Naive thymus-derived CD4-positive, alpha-beta T cell (primary cell): ENCODE measurements at regions of chr3 and their contacts with region 1.

Region 1: DNA sequence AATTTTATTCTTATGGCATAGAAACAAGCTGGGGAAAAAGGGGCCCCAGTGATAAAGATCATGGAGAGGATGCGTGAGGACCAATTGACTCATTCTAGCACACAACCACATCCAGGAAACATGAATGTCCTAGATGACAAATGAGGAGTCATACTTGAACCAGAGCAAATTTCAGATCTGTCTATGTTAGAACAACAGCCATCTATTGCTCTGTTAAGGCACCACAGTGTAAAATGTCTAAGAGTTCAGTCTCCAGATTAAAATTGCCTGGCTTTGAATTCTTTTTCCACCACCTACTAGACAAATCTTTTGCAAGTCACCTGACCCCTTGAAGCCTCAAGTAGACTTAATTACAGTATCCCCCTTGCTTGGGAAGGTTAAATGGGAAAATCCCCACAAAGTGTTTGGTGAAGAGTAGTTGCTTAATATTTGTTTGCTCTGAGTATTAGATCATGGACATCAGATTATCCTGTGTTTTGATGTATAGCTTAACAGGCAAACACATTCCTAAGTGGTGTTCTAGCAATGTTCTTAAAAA is 258.7 kb upstream of the TGFBR2 start:
- DNase-seq: peak in 6 of 9 donors; percentile 11 to 48 (median 32)
- ATAC-seq: peak; percentile 54
- H3K4me3 ChIP-seq: no peak overlapping the region
- H3K4me3 Mint-ChIP-seq: peak overlapping the region in 6 of 10 donors; percentile 5 to 70 (median 32)
- H3K27ac ChIP-seq: no peak overlapping the region
- H3K27ac Mint-ChIP-seq: peak overlapping the region in 5 of 9 donors; percentile 33 to 80 (median 76)
- H3K4me1 ChIP-seq: peaks cover 15 to 47% of the 10 kb centered on the region in 2 donors
- H3K4me1 Mint-ChIP-seq: peaks cover 40 to 82% (median 71%) of the 10 kb centered on the region in 7 donors
- H3K27me3 ChIP-seq: no peaks in the 10 kb centered on the region
- H3K27me3 Mint-ChIP-seq: peaks cover 0 to 17% (median 0%) of the 10 kb centered on the region in 5 donors

Region 2: DNA sequence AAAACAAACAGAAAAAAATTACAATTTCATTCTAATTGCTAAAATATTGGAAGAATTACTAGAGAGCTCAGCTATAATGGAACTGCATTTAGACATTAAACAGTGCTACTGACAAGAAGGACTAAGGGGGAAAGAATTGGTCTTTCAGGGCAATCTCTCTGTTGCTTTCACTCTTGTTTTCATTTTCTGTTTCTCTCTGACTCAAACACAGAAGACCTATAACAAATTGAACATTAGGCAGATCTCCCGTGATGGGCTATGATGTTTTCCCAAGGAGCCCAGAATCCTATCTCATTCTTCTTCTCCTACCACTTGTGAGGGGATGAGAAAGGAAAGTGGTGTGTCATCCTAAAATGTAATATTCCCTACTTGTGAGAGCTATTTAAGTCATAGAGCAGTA is 99.3 kb before region 1 on chr3:
- CTCF ChIA-PET with region 1: no interaction called
- POLR2A ChIA-PET with region 1: no interaction called
- intact Hi-C with region 1: loop called in 1 of 2 experiments (anchors 5 kb)
- DNase-seq: no peak
- ATAC-seq: no peak
- H3K4me3 ChIP-seq: no peak overlapping the region
- H3K4me3 Mint-ChIP-seq: peak overlapping the region in 1 of 10 donors; percentile 24
- H3K27ac ChIP-seq: no peak overlapping the region
- H3K27ac Mint-ChIP-seq: peak overlapping the region in 1 of 9 donors; percentile 36
- H3K4me1 ChIP-seq: no peaks in the 10 kb centered on the region
- H3K4me1 Mint-ChIP-seq: peaks cover 0 to 12% (median 3%) of the 10 kb centered on the region in 7 donors
- H3K27me3 ChIP-seq: no peaks in the 10 kb centered on the region
- H3K27me3 Mint-ChIP-seq: peaks cover 0 to 5% (median 3%) of the 10 kb centered on the region in 5 donors

Region 3: GRCh38 chr3:30286007-30286669 is 61.6 kb before region 1 on chr3:
- CTCF ChIA-PET with region 1: no interaction called
- POLR2A ChIA-PET with region 1: no interaction called
- intact Hi-C with region 1: loop called in 1 of 2 experiments (anchors 5 kb)
- DNase-seq: no peak
- ATAC-seq: no peak
- H3K4me3 ChIP-seq: no peak overlapping the region
- H3K4me3 Mint-ChIP-seq: no peak overlapping the region
- H3K27ac ChIP-seq: no peak overlapping the region
- H3K27ac Mint-ChIP-seq: no peak overlapping the region
- H3K4me1 ChIP-seq: peaks cover 0 to 9% of the 10 kb centered on the region in 2 donors
- H3K4me1 Mint-ChIP-seq: peaks cover 11 to 26% (median 14%) of the 10 kb centered on the region in 7 donors
- H3K27me3 ChIP-seq: no peaks in the 10 kb centered on the region
- H3K27me3 Mint-ChIP-seq: no peaks in the 10 kb centered on the region

Region 4: GRCh38 chr3:30401971-30402370 is 54.2 kb after region 1 on chr3:
- CTCF ChIA-PET with region 1: no interaction called
- POLR2A ChIA-PET with region 1: no interaction called
- intact Hi-C with region 1: no loop called
- DNase-seq: no peak
- ATAC-seq: no peak
- H3K4me3 ChIP-seq: no peak overlapping the region
- H3K4me3 Mint-ChIP-seq: no peak overlapping the region
- H3K27ac ChIP-seq: no peak overlapping the region
- H3K27ac Mint-ChIP-seq: no peak overlapping the region
- H3K4me1 ChIP-seq: no peaks in the 10 kb centered on the region
- H3K4me1 Mint-ChIP-seq: peaks cover 5 to 32% (median 21%) of the 10 kb centered on the region in 7 donors
- H3K27me3 ChIP-seq: no peaks in the 10 kb centered on the region
- H3K27me3 Mint-ChIP-seq: no peaks in the 10 kb centered on the region

Region 5: GRCh38 chr3:30511524-30512278 is 164.0 kb after region 1 on chr3:
- CTCF ChIA-PET with region 1: no interaction called
- POLR2A ChIA-PET with region 1: no interaction called
- intact Hi-C with region 1: no loop called
- DNase-seq: peak in 1 of 9 donors; percentile 4
- ATAC-seq: no peak
- H3K4me3 ChIP-seq: no peak overlapping the region
- H3K4me3 Mint-ChIP-seq: peak overlapping the region in 6 of 10 donors; percentile 7 to 55 (median 30)
- H3K27ac ChIP-seq: no peak overlapping the region
- H3K27ac Mint-ChIP-seq: peak overlapping the region in 2 of 9 donors; percentile 38 to 76
- H3K4me1 ChIP-seq: peaks cover 0 to 10% of the 10 kb centered on the region in 2 donors
- H3K4me1 Mint-ChIP-seq: peaks cover 8 to 17% (median 12%) of the 10 kb centered on the region in 7 donors
- H3K27me3 ChIP-seq: no peaks in the 10 kb centered on the region
- H3K27me3 Mint-ChIP-seq: no peaks in the 10 kb centered on the region

Region 6: GRCh38 chr3:30708472-30708871 is 360.7 kb after region 1 on chr3:
- CTCF ChIA-PET with region 1: no interaction called
- POLR2A ChIA-PET with region 1: no interaction called
- intact Hi-C with region 1: no loop called
- DNase-seq: no peak
- ATAC-seq: no peak
- H3K4me3 ChIP-seq: no peak overlapping the region
- H3K4me3 Mint-ChIP-seq: no peak overlapping the region
- H3K27ac ChIP-seq: no peak overlapping the region
- H3K27ac Mint-ChIP-seq: no peak overlapping the region
- H3K4me1 ChIP-seq: peaks cover 0 to 11% of the 10 kb centered on the region in 2 donors
- H3K4me1 Mint-ChIP-seq: peaks cover 5 to 62% (median 44%) of the 10 kb centered on the region in 7 donors
- H3K27me3 ChIP-seq: no peaks in the 10 kb centered on the region
- H3K27me3 Mint-ChIP-seq: no peaks in the 10 kb centered on the region

Region 7: GRCh38 chr3:30934208-30934550 is 586.4 kb after region 1 on chr3:
- CTCF ChIA-PET with region 1: no interaction called
- POLR2A ChIA-PET with region 1: no interaction called
- intact Hi-C with region 1: no loop called
- DNase-seq: peak in 4 of 9 donors; percentile 2 to 16 (median 10)
- ATAC-seq: no peak
- H3K4me3 ChIP-seq: no peak overlapping the region
- H3K4me3 Mint-ChIP-seq: peak overlapping the region in 3 of 10 donors; percentile 11 to 65 (median 24)
- H3K27ac ChIP-seq: no peak overlapping the region
- H3K27ac Mint-ChIP-seq: no peak overlapping the region
- H3K4me1 ChIP-seq: no peaks in the 10 kb centered on the region
- H3K4me1 Mint-ChIP-seq: peaks cover 2 to 10% (median 8%) of the 10 kb centered on the region in 7 donors
- H3K27me3 ChIP-seq: no peaks in the 10 kb centered on the region
- H3K27me3 Mint-ChIP-seq: no peaks in the 10 kb centered on the region